ENCODE measurements at regions of chr17 and their contacts with region 1.

Region 1: GRCh38 chr17:559551-560431 is 154.8 kb downstream of the VPS53 start:
- DNase-seq: peak in 13 of 42 donors; percentile 13 to 79 (median 31)

Region 2: GRCh38 chr17:418421-418751 is 141.4 kb before region 1 on chr17:
- intact Hi-C with region 1: no loop called
- DNase-seq: no peak

Region 3: DNA sequence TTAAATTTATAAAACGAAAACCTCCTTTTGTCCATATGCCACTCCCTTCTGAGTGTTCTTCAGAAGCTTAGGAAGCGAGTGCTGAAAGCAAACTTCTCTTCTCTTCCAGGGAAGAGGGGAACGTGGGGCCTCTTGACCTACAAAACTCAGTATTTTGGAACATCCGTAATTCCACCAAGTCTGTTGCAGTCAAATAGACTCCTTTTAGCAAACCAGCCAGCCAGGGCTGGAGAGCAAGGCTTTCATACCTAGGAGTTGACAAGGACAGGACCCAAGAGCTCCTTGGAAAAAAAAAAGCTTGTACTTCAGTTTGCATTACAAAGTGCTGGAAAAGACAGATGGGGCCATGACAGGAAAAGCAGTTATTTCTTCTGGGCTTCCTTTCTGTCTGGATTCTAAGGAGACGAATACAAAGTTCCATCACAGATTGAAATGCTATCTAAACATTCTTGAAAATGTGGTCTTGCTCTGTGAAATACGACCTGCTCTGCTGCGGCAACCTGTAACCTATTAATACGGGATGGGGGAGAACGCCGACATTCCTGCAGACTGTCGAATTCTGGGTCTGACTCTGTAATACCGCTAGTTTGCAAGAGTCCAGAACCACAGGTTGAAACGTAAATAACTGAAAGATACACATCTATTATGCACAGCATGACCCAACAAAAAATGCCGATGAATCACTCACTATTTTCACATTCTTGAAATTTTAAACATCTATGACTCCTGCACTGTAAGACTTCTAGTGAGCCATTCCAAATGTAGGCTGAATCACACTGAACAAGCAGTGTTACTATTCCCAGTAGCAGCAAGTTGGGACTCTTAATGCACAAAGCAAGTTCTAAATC is 134.2 kb after region 1 on chr17:
- intact Hi-C with region 1: loop called (anchors 10 kb)
- DNase-seq: peak in 1 of 42 donors; percentile 48

Measured in head of caudate nucleus (tissue), 42 donors.